ENCODE measurements at regions of chr4 and their contacts with region 1.

Region 1: GRCh38 chr4:137861682-137862081 is 329.4 kb upstream of the PCDH18 start:
- DNase-seq: no peak
- H3K4me3 ChIP-seq: no peak overlapping the region
- H3K27ac ChIP-seq: no peak overlapping the region
- H3K4me1 ChIP-seq: no peaks in the 10 kb centered on the region
- H3K27me3 ChIP-seq: no peaks in the 10 kb centered on the region
- CTCF ChIP-seq: no peak; a peak in 1 of 4 replicates
- EP300 ChIP-seq: no peak
- POLR2A ChIP-seq: no peak
- RAD21 ChIP-seq: peak; percentile 16 to 34; a peak in 3 of 4 replicates

Region 2: DNA sequence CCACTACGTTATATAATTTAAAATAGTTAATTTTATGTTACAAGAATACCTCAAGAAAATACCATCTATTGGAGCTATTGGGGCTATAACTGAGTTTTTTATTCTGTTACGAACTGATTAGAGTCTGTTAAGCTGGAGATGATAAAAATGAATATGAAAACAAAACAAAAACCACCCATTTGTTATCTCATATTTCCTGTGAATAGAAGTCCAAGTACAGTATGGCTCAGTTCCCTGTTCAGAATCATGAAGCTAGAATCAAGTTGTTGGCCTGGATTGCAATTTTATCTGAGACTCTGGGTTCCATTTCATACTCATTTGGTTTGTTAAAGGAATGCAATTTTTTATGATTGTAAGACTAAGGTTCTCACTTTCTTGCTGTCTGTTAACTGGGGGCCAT is 10.2 kb before region 1 on chr4:
- CTCF ChIA-PET with region 1: interaction called, 11 read pairs
- POLR2A ChIA-PET with region 1: no interaction called
- DNase-seq: no peak
- H3K4me3 ChIP-seq: no peak overlapping the region
- H3K27ac ChIP-seq: no peak overlapping the region
- H3K4me1 ChIP-seq: no peaks in the 10 kb centered on the region
- H3K27me3 ChIP-seq: no peaks in the 10 kb centered on the region
- CTCF ChIP-seq: no peak
- EP300 ChIP-seq: no peak
- POLR2A ChIP-seq: no peak
- RAD21 ChIP-seq: no peak

Measured in H1 (cell line).